ENCODE measurements at regions of chr3 and their contacts with region 1.

Region 1: GRCh38 chr3:42101048-42101447 is 9.9 kb downstream of the TRAK1 start:
- DNase-seq: no peak
- H3K4me3 ChIP-seq: no peak overlapping the region
- H3K27ac ChIP-seq: no peak overlapping the region
- H3K4me1 ChIP-seq: peaks cover 5 to 33% (median 29%) of the 10 kb centered on the region in 4 experiments
- H3K27me3 ChIP-seq: no peaks in the 10 kb centered on the region

Region 2: DNA sequence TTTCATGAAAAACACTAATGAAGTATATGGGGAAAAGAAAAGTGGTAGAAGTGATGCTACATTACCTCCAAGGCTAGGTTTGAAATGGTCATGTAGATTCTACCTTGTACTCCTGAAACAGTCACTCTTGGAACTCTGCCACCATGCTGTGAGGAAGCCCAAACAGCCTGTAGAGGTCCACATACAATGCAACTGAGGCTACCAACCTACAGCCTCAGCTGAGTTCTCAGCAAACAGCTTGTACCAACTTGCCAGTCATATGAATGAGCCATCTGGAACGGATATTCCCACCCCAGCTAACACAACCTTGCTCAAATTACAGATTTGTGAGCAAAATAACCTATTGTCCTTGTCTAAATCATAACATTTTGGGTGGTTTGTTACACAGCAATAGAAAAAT is 332.7 kb before region 1 on chr3:
- CTCF ChIA-PET with region 1: no interaction called
- POLR2A ChIA-PET with region 1: no interaction called
- DNase-seq: no peak
- H3K4me3 ChIP-seq: no peak overlapping the region
- H3K27ac ChIP-seq: no peak overlapping the region
- H3K4me1 ChIP-seq: no peaks in the 10 kb centered on the region
- H3K27me3 ChIP-seq: no peaks in the 10 kb centered on the region

Region 3: GRCh38 chr3:41893977-41894376 is 207.1 kb before region 1 on chr3:
- CTCF ChIA-PET with region 1: interaction called, 69 read pairs
- POLR2A ChIA-PET with region 1: interaction called, 3 read pairs
- DNase-seq: peak; percentile 42 to 75 (median 66)
- H3K4me3 ChIP-seq: no peak overlapping the region
- H3K27ac ChIP-seq: no peak overlapping the region
- H3K4me1 ChIP-seq: no peaks in the 10 kb centered on the region
- H3K27me3 ChIP-seq: no peaks in the 10 kb centered on the region

Region 4: GRCh38 chr3:41997702-41998550 is 103.1 kb before region 1 on chr3:
- CTCF ChIA-PET with region 1: interaction called, 45 read pairs
- POLR2A ChIA-PET with region 1: no interaction called
- DNase-seq: peak; percentile 46 to 64 (median 56)
- H3K4me3 ChIP-seq: no peak overlapping the region
- H3K27ac ChIP-seq: no peak overlapping the region
- H3K4me1 ChIP-seq: peaks cover 0 to 6% (median 3%) of the 10 kb centered on the region in 4 experiments
- H3K27me3 ChIP-seq: no peaks in the 10 kb centered on the region

Region 5: DNA sequence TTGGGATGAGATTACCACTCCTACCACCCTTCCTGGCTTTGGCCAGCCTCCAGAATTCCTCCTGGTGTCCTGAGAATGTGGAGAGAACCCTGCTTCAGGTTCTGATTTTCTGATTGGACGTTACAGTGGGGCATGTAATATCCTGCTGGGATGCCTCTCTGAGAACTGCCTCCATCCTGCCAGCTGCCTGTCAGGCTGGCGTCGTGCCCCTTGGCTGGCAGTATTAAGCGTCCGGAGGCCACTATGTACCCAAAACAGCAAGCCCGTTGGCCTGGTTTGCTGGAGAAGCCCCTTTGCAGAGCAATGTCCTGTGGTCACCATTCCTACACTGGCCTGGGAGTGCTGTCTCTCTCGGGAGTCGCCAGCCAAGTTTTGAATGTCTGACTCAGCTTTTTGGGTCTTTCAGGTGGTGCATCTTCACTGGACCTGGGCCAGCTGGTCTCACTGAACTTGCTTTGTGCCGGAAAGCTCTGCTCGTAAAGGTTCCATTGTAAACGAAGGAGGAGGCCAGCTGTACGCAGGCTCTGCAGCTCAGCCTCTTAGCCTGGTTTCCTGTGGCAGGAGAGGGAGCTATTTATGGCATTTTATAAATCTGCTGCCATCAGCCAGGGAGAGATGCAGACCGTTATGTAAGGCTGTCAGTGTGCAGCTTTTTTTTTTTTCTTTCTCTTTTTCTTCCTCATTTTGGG is 29.0 kb before region 1 on chr3:
- CTCF ChIA-PET with region 1: interaction called, 11 read pairs
- POLR2A ChIA-PET with region 1: no interaction called
- DNase-seq: peak; percentile 52 to 94 (median 85)
- H3K4me3 ChIP-seq: peak overlapping the region in 6 of 7 experiments; percentile 25 to 72 (median 58)
- H3K27ac ChIP-seq: peak overlapping the region; percentile 47 to 74
- H3K4me1 ChIP-seq: peaks cover 19 to 74% (median 54%) of the 10 kb centered on the region in 4 experiments
- H3K27me3 ChIP-seq: no peaks in the 10 kb centered on the region

Region 6: GRCh38 chr3:42190701-42191462 is 89.8 kb after region 1 on chr3:
- CTCF ChIA-PET with region 1: interaction called, 17 read pairs
- POLR2A ChIA-PET with region 1: no interaction called
- DNase-seq: peak; percentile 55 to 76 (median 67)
- H3K4me3 ChIP-seq: no peak overlapping the region
- H3K27ac ChIP-seq: no peak overlapping the region
- H3K4me1 ChIP-seq: peaks cover 4 to 28% (median 18%) of the 10 kb centered on the region in 4 experiments
- H3K27me3 ChIP-seq: no peaks in the 10 kb centered on the region